H1 (cell line): ENCODE measurements at regions of chr1 and their contacts with region 1.

Region 1: DNA sequence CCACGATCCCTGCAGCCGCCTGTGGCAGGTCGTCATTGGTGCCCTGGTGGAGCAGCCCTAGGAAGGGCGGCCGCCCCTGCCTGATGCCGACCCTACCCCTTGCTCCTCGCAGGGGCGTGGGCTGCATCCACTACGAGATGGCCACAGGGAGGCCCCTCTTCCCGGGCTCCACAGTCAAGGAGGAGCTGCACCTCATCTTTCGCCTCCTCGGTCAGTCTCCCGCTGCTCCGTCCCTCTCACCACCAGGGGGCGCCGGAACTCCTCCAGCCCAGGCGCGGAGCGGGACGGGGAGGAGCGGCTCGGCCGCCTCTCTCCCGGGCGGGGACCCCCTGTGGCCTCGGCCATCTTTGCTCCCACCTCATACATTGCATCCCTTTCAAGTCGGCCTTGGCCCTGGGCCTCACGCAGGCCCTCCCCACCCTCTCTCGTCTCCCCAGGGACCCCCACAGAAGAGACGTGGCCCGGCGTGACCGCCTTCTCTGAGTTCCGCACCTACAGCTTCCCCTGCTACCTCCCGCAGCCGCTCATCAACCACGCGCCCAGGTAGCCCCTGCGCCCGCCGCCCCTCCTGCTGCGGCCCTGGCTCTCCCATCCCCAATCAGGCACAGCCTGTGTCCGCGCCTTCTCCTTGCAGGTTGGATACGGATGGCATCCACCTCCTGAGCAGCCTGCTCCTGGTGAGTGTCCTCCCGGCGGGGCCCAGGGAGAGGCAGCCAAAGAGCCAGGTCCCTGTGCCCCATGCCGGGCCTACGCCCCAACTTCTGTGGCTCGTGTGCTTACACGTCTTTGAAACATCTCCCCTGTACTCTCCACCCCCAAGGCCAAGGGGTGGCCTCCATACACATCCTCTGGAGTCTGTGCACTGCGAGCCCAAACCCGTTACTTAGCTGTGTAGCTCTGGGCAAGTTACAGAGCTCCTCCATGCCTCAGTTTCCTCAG is 24.7 kb downstream of the CDK18 start:
- DNase-seq: peak; percentile 56 to 100
- H3K4me3 ChIP-seq: peak overlapping the region in 2 of 4 experiments; percentile 19 to 26; a peak in 3 of 8 replicates
- H3K27ac ChIP-seq: no peak overlapping the region
- H3K4me1 ChIP-seq: peaks cover 0 to 10% (median 2%) of the 10 kb centered on the region in 4 experiments; a peak in 4 of 7 replicates
- H3K27me3 ChIP-seq: no peaks in the 10 kb centered on the region; a peak in 1 of 7 replicates
- CTCF ChIP-seq: peak in 2 of 3 experiments; percentile 85 to 94; a peak in 3 of 4 replicates
- EP300 ChIP-seq: no peak; a peak in 1 of 3 replicates
- POLR2A ChIP-seq: no peak
- RAD21 ChIP-seq: peak; percentile 77 to 88

Region 2: DNA sequence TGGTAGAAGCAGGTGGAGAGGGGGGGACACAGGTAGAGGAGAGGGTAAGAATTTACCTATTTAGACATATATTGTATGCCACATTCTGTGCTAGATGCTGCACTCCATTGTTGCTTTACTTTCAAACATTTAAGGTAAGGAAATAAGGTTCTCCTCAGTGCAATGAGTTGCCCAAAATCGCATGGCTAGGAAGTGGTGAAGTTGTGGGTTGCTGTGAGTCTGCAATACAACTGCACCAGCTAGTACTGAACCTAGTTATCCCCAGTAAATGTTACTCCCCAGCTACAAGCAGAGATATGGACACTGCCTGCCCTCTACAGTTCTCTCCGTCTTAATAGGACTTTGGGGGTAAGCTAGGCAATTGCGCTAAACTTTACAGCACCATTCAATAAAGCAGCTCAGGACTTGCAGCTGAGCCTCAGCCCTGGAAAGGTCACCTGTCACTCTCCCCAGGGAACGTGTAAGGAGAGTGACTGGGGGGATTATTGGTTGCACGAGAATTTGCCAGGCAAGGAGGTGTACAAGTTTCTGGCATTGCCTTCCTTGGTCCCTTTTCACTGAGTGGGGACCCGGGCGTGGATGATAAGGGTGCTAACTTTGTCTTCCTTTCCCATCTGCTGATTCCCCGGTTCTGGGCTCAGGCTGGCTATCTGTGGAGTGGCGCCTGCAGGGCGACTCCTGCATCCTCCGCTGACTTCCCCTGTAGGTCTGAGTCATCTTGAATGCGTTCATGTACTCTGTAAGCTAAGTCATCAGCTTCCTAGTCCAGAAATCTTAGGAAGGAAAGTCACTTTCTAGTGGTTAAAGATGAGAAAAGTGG is 557.4 kb before region 1 on chr1:
- CTCF ChIA-PET with region 1: no interaction called
- POLR2A ChIA-PET with region 1: no interaction called
- DNase-seq: no peak
- H3K4me3 ChIP-seq: no peak overlapping the region
- H3K27ac ChIP-seq: no peak overlapping the region
- H3K4me1 ChIP-seq: no peaks in the 10 kb centered on the region
- H3K27me3 ChIP-seq: no peaks in the 10 kb centered on the region
- CTCF ChIP-seq: no peak
- EP300 ChIP-seq: no peak
- POLR2A ChIP-seq: no peak
- RAD21 ChIP-seq: no peak

Region 3: DNA sequence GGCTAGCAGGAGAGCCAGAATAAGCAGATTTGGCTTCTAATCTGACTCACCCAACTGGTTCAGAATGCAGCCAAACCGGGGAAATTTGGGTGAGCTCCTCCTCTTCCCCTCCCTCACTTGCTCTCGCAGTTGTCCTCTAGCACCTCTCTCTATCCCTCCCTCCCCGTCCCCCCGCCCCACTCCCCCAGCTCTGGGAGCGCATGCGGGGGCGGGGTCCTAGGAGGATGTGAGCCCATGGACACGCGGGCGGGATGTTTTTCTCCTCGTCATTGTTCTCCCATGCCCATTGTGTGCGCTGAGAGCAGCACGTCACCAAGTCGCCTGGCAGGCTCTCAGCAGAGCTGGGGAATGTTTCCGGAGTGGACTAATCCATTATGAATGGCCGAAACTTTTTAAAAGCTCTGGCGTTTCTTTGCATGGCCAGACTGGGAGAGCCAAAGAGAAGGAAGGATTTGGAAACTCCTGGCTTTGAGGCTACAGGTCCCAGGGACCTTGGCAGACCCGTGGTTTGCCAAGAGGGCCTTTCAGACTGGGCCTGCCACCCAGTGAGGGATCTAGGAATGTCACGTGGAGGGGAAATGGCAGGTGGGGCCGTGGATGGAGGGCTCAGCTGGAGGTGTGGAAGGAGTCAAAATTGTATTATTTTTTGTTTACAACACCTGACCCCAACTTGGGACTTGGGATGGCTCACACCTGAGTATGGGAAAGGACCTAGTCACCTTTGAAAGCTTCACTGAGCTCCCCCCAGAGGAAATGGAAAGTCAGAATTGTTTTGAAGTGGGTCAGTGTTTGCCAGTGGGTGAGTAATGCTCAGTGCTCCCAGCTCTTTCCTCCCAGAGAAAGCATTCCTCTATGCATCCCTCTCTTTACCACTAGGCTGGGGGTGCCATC is 14.5 kb after region 1 on chr1:
- CTCF ChIA-PET with region 1: interaction called, 39 read pairs
- POLR2A ChIA-PET with region 1: interaction called, 27 read pairs
- DNase-seq: peak; percentile 50 to 80
- H3K4me3 ChIP-seq: peak overlapping the region; percentile 12 to 52 (median 28); a peak in 7 of 8 replicates
- H3K27ac ChIP-seq: no peak overlapping the region; the same call in 1 of the 2 replicates
- H3K4me1 ChIP-seq: peaks cover 0 to 14% (median 7%) of the 10 kb centered on the region in 4 experiments; a peak in 5 of 7 replicates
- H3K27me3 ChIP-seq: peaks cover 0 to 26% (median 13%) of the 10 kb centered on the region in 4 experiments; a peak in 6 of 7 replicates
- CTCF ChIP-seq: no peak
- EP300 ChIP-seq: no peak
- POLR2A ChIP-seq: no peak
- RAD21 ChIP-seq: no peak

Region 4: GRCh38 chr1:205554026-205554811 is 25.1 kb after region 1 on chr1:
- CTCF ChIA-PET with region 1: interaction called, 24 read pairs
- POLR2A ChIA-PET with region 1: no interaction called
- DNase-seq: no peak
- H3K4me3 ChIP-seq: no peak overlapping the region
- H3K27ac ChIP-seq: no peak overlapping the region
- H3K4me1 ChIP-seq: no peaks in the 10 kb centered on the region
- H3K27me3 ChIP-seq: 0 out of 7 replicates have a peak, but pooled peaks cover 0 to 2% (median 0%) of the 10 kb centered on the region in 4 experiments
- CTCF ChIP-seq: no peak
- EP300 ChIP-seq: no peak
- POLR2A ChIP-seq: no peak
- RAD21 ChIP-seq: no peak

Region 5: GRCh38 chr1:205578780-205579606 is 49.8 kb after region 1 on chr1:
- CTCF ChIA-PET with region 1: interaction called, 22 read pairs
- POLR2A ChIA-PET with region 1: no interaction called
- DNase-seq: no peak
- H3K4me3 ChIP-seq: no peak overlapping the region
- H3K27ac ChIP-seq: no peak overlapping the region
- H3K4me1 ChIP-seq: peaks cover 0 to 11% (median 0%) of the 10 kb centered on the region in 4 experiments; a peak in 4 of 7 replicates
- H3K27me3 ChIP-seq: peaks cover 0 to 8% (median 3%) of the 10 kb centered on the region in 4 experiments; a peak in 4 of 7 replicates
- CTCF ChIP-seq: no peak
- EP300 ChIP-seq: no peak
- POLR2A ChIP-seq: no peak
- RAD21 ChIP-seq: no peak

Region 6: DNA sequence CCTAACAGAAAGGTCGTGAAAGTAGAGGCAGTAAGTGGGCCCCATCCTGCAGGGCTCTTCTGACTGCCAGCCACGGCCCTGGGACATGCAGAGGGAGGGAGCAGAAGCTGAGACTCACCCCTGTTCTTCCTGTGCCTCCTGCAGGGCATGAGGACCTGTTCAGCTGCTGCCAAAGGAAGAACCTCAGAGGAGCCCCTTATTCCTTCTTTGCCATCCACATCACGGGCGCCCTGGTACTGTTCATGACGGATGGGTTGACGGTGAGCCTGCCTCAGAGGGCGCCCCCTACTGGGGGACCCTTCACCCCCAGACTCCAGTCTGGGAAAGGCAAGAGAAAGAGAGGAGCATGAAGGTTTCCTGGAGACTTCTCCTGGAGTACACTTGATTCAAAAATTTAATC is 55.6 kb after region 1 on chr1:
- CTCF ChIA-PET with region 1: interaction called, 22 read pairs
- POLR2A ChIA-PET with region 1: interaction called, 3 read pairs
- DNase-seq: peak in 1 of 2 experiments; percentile 68
- H3K4me3 ChIP-seq: no peak overlapping the region
- H3K27ac ChIP-seq: no peak overlapping the region
- H3K4me1 ChIP-seq: peaks cover 0 to 5% (median 1%) of the 10 kb centered on the region in 4 experiments; a peak in 5 of 7 replicates
- H3K27me3 ChIP-seq: peaks cover 0 to 2% (median 0%) of the 10 kb centered on the region in 4 experiments; a peak in 2 of 7 replicates
- CTCF ChIP-seq: peak; percentile 33 to 54 (median 47)
- EP300 ChIP-seq: no peak
- POLR2A ChIP-seq: no peak
- RAD21 ChIP-seq: peak; percentile 13 to 46; a peak in 3 of 4 replicates

Region 7: GRCh38 chr1:205719762-205720161 is 190.6 kb after region 1 on chr1:
- CTCF ChIA-PET with region 1: no interaction called
- POLR2A ChIA-PET with region 1: no interaction called
- DNase-seq: no peak
- H3K4me3 ChIP-seq: no peak overlapping the region
- H3K27ac ChIP-seq: no peak overlapping the region
- H3K4me1 ChIP-seq: peaks cover 0 to 2% (median 0%) of the 10 kb centered on the region in 4 experiments; a peak in 2 of 7 replicates
- H3K27me3 ChIP-seq: no peaks in the 10 kb centered on the region
- CTCF ChIP-seq: no peak
- EP300 ChIP-seq: no peak
- POLR2A ChIP-seq: no peak
- RAD21 ChIP-seq: no peak

Region 8: DNA sequence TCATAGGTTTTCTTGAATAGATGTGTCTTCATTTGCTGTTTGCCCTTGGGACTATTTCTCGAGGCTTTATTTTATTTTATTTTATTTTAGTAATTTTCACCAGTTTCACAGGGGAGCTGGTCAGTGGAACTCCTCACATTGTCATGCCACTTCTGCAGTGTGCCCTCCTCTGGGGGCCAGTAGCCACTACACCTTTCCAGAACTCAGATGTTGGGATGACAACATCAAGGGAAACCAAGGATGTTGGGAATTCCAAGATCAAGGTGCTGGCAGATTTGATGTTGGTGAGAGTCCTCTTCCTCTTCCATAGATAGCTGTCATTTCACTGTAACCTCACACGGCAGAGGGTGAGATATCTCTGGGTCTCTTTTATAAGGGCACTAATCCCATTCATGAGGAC is 378.6 kb after region 1 on chr1:
- CTCF ChIA-PET with region 1: no interaction called
- POLR2A ChIA-PET with region 1: no interaction called
- DNase-seq: no peak
- H3K4me3 ChIP-seq: no peak overlapping the region
- H3K27ac ChIP-seq: no peak overlapping the region
- H3K4me1 ChIP-seq: no peaks in the 10 kb centered on the region
- H3K27me3 ChIP-seq: no peaks in the 10 kb centered on the region
- CTCF ChIP-seq: peak; percentile 70 to 79 (median 71)
- EP300 ChIP-seq: no peak
- POLR2A ChIP-seq: no peak
- RAD21 ChIP-seq: peak; percentile 71 to 79